ENCODE measurements at regions of chrX and their contacts with region 1.

Region 1: DNA sequence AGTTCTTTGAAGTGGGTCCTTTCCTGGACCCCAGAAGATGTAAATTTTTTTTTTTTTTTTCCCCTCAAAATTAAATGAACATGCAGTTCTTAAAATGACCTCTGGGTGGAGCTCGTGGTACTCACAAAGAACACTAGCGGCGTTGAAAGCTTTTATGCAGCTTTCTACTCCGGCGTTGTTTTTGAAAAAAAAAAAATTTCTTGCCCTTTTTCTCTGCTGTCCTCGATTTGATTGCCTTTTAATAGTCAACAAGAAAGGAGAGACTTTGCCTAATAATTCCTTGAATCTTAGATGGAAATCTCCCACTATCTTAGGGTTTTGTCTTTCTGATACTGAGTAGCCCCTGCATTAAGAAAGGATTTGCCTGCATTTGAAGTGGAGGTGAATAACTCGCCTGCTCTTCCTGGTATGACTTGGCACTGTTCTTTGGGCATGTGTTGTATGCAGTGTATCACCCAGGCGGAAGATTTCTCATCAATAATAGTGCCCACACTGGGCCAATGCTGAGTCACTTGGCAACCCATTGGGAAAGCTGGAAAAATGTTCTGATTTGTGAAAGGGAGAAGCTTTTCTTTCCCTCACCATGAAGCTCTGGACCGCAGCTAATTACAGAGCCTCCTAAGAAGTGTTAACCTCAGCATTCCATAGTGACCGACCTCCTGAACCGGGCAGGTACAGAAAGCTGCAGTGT is 104.0 kb downstream of the PHEX start:
- DNase-seq: peak; percentile 54
- ATAC-seq: no peak
- H3K4me3 ChIP-seq: no peak overlapping the region
- H3K4me3 Mint-ChIP-seq: no peak overlapping the region
- H3K27ac ChIP-seq: no peak overlapping the region
- H3K27ac Mint-ChIP-seq: no peak overlapping the region
- H3K4me1 ChIP-seq: no peaks in the 10 kb centered on the region
- H3K4me1 Mint-ChIP-seq: peaks cover 6% of the 10 kb centered on the region
- H3K27me3 ChIP-seq: no peaks in the 10 kb centered on the region
- H3K27me3 Mint-ChIP-seq: no peaks in the 10 kb centered on the region
- CTCF ChIP-seq: peak; percentile 71

Region 2: GRCh38 chrX:22192417-22193060 is 56.4 kb after region 1 on chrX:
- CTCF ChIA-PET with region 1: interaction called, 11 read pairs
- POLR2A ChIA-PET with region 1: no interaction called
- intact Hi-C with region 1: no loop called
- DNase-seq: peak; percentile 60
- ATAC-seq: peak; percentile 64
- H3K4me3 ChIP-seq: no peak overlapping the region
- H3K4me3 Mint-ChIP-seq: peak overlapping the region; percentile 42
- H3K27ac ChIP-seq: no peak overlapping the region
- H3K27ac Mint-ChIP-seq: no peak overlapping the region
- H3K4me1 ChIP-seq: peaks cover 17 to 18% of the 10 kb centered on the region in 2 donors
- H3K4me1 Mint-ChIP-seq: peaks cover 16% of the 10 kb centered on the region
- H3K27me3 ChIP-seq: no peaks in the 10 kb centered on the region
- H3K27me3 Mint-ChIP-seq: no peaks in the 10 kb centered on the region
- CTCF ChIP-seq: peak; percentile 81

Region 3: GRCh38 chrX:22534643-22535042 is 398.5 kb after region 1 on chrX:
- CTCF ChIA-PET with region 1: no interaction called
- POLR2A ChIA-PET with region 1: no interaction called
- intact Hi-C with region 1: loop called (anchors 10 kb)
- DNase-seq: no peak
- ATAC-seq: no peak
- H3K4me3 ChIP-seq: no peak overlapping the region
- H3K4me3 Mint-ChIP-seq: no peak overlapping the region
- H3K27ac ChIP-seq: no peak overlapping the region
- H3K27ac Mint-ChIP-seq: no peak overlapping the region
- H3K4me1 ChIP-seq: no peaks in the 10 kb centered on the region
- H3K4me1 Mint-ChIP-seq: peaks cover 4% of the 10 kb centered on the region
- H3K27me3 ChIP-seq: no peaks in the 10 kb centered on the region
- H3K27me3 Mint-ChIP-seq: no peaks in the 10 kb centered on the region
- CTCF ChIP-seq: no peak

Region 4: GRCh38 chrX:22748093-22748999 is 612.2 kb after region 1 on chrX:
- CTCF ChIA-PET with region 1: interaction called, 28 read pairs
- POLR2A ChIA-PET with region 1: no interaction called
- intact Hi-C with region 1: loop called (anchors 1 kb)
- DNase-seq: peak; percentile 56
- ATAC-seq: peak; percentile 45
- H3K4me3 ChIP-seq: no peak overlapping the region
- H3K4me3 Mint-ChIP-seq: no peak overlapping the region
- H3K27ac ChIP-seq: no peak overlapping the region
- H3K27ac Mint-ChIP-seq: no peak overlapping the region
- H3K4me1 ChIP-seq: no peaks in the 10 kb centered on the region
- H3K4me1 Mint-ChIP-seq: no peaks in the 10 kb centered on the region
- H3K27me3 ChIP-seq: no peaks in the 10 kb centered on the region
- H3K27me3 Mint-ChIP-seq: no peaks in the 10 kb centered on the region
- CTCF ChIP-seq: peak; percentile 71

Measured in B cell (primary cell).